OCI-LY7 (cell line): ENCODE measurements at regions of chr2 and their contacts with region 1.

Region 1: DNA sequence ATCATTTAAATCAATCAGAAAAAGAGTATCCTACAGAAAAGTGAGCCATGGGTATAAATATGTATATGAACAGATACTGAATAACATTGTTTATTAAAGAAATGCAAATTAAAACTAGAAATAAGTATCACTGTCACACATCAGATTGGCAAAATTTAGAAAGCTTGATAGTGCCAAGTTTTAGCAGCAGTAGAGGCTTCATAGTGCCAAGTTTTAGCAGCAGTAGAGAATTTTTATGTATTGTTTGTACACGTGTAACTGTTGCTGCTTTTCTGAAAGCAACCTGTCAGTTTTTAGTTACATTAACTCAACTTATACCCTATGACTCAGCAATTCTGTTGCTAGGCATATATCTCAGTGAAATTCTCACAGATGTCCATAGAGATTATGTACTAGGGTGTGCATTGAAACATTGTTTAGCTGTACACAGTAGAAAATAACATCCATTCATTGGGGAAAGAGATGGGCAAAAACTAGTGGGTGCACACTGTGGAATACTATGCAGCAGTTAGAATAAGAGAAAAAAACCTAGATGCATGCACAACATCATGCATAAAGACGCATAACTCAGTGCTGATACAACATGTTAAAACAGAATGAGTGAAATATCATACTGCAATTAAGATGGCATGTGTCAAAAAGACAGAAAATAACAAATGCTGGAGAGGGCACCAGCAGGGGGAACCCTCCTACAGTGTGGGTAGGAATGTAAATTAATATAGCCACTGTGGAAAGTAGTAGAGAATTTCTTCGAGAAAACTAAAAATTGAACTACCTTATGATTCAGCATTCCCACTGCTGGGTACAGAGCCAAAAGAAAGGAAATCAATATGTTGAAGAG is 294.5 kb upstream of the NT5C1B start:
- DNase-seq: peak; percentile 29
- H3K4me3 ChIP-seq: no peak overlapping the region
- H3K27ac ChIP-seq: no peak overlapping the region
- H3K4me1 ChIP-seq: no peaks in the 10 kb centered on the region
- CTCF ChIP-seq: peak; percentile 74

Region 2: DNA sequence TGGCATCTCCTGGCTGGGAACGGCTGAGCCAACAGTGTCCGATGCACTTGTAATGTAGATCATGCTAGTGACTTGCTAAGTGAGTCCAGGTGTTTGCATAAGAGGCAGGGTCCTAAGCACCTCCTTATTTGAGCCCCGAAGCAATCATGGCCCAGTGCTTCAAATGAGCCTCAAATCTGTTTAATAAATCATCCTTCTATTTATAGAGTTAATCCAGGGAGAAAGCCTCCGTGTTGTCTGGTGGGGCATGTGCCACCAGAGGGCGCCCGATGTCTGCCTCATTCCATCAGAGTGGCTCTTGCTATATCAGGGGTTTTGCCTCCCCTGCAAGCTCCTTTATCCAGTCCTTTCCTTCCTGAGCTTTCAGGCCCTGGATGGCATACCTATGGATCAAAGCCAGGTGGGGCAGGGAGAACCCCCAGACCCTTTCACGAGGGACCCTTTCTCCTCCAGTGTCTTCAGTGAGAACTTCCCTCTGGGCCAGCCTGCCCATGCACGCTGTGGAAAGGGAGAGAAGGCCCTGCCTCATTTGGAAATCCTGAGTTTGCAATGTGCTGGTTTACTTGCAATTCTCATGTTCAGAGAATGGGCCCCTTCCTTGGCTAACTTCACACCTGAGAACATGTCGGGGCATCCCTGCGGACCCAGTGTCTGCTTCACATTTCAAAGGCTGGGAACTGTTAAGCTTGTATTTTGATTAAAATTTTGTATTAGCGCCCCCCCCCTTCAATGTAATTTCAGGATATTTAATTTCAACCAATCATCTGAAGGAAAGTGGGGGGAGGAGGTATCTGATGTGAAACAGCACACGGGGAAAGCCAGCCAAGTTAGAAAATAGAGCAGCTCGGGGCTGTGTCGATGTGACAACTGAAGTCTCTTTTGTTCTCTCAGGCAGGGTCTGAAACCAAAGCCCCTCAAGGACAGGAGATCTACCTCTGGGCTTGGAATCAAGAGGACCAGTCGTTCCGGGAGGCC is 363.1 kb before region 1 on chr2:
- CTCF ChIA-PET with region 1: no interaction called
- POLR2A ChIA-PET with region 1: no interaction called
- intact Hi-C with region 1: loop called (anchors 10 kb)
- DNase-seq: peak; percentile 58
- H3K4me3 ChIP-seq: no peak overlapping the region
- H3K27ac ChIP-seq: no peak overlapping the region
- H3K4me1 ChIP-seq: no peaks in the 10 kb centered on the region
- CTCF ChIP-seq: peak; percentile 89

Region 3: GRCh38 chr2:18871430-18871829 is 12.4 kb before region 1 on chr2:
- CTCF ChIA-PET with region 1: no interaction called
- POLR2A ChIA-PET with region 1: no interaction called
- intact Hi-C with region 1: no loop called
- DNase-seq: no peak
- H3K4me3 ChIP-seq: no peak overlapping the region
- H3K27ac ChIP-seq: no peak overlapping the region
- H3K4me1 ChIP-seq: no peaks in the 10 kb centered on the region
- CTCF ChIP-seq: no peak

Region 4: DNA sequence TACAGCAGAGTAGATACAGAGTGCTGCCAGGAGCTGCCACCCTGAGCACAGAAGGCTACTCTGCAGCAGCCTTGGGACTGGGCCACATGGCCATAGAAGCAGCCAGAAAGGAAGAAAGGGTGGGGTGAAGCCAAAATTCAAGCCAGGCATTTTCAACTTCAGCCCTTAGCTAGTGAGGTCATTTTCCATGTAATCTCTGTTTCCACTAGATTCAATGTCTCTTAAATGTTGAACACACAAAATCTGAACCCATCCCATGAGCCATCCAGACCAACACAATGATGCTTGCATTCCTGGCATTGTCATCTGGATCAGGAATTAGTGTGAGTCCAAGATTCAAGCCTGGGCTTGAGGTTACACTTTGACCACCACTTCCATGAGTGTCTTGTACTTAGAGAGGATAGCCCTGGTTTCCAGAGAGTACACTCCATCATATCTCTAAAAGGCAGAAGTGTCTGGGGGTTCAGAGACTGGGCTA is 231.0 kb after region 1 on chr2:
- CTCF ChIA-PET with region 1: no interaction called
- POLR2A ChIA-PET with region 1: no interaction called
- intact Hi-C with region 1: loop called (anchors 10 kb)
- DNase-seq: no peak
- H3K4me3 ChIP-seq: no peak overlapping the region
- H3K27ac ChIP-seq: no peak overlapping the region
- H3K4me1 ChIP-seq: no peaks in the 10 kb centered on the region
- CTCF ChIP-seq: no peak

Region 5: DNA sequence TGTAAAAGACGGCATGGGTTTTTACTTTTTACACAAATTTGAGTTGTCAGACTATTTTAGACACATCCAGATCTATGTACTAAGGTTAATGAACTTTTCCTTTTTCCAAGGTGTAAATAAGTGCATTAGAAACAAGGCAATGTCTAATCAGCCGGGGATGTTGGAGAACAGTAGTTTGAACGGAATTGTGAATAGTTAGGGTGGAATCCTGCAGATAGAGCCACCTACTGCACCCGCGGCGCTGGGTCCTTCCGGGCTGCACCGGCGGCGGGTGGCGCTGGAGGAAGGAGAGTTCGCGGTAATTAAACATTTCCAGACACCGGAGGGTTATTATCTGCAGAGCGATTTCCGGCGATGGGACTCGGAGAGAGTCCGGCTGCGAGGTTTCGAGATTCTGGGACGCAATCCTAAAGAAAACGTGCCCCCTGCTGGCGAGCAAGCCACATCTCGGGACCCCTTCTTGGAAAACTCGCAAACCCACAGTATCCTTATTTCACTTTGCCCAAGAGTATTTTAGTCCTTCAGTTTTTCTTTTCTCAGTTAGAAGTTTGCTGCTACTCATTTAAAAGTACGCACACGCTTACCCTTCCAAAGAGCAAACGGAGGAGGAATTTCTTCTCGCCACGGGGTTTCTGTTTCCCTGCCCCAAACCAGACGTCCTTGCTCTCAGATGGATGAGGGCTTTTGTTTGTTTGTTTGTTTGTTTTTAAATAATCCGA is 479.1 kb after region 1 on chr2:
- CTCF ChIA-PET with region 1: no interaction called
- POLR2A ChIA-PET with region 1: no interaction called
- intact Hi-C with region 1: loop called (anchors 5 kb)
- DNase-seq: peak; percentile 67
- H3K4me3 ChIP-seq: peak overlapping the region; percentile 63
- H3K27ac ChIP-seq: no peak overlapping the region
- H3K4me1 ChIP-seq: no peaks in the 10 kb centered on the region
- CTCF ChIP-seq: peak; percentile 77